ENCODE measurements at regions of chr1 and their contacts with region 1.

Region 1: DNA sequence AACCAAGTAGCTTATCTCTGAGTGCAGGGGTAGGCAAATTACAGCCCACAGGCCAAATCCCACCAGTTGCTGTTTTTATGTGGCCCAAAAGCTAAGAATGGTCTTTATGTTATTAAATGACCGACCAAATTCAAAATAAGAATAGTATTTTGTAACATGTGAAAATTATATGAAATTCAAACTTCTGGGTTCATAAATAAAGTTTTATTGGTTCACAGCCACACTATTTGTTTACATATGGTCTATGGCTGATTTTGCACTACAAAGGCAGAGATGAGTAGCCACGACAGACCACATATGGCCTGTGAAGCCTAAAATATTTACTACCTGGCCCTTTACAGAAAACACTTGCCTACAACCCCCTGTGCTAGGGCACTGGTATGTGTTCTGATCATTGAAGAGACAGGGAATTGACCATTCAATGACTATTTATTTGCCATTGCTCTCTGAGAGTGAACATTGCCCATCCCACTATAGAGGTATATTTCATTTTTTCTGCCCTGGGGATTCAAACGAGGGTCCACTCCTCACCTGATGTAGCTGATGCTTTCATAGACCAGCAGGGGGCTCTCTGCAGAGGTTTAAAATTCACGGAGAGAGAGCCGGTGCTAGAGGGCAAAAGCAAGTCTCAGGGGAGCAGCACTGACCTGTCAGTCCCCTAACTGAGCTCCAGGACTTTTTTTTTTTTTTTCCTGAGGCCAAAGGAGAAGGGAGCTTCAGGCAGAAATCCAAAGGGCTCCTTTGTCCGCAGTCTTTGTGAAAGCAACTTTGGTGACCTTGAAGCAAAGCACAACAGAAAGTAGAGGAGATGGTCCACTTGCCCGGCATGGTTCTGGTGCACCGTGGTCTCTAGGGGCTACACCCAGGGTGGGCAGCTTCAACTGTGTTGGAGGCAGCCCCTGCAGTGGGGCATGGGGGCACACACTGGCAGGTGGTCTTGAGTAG is 7.3 kb upstream of the GNL2 start:
- DNase-seq: no peak
- ATAC-seq: no peak
- H3K4me3 ChIP-seq: no peak overlapping the region
- H3K27ac ChIP-seq: no peak overlapping the region
- H3K4me1 ChIP-seq: no peaks in the 10 kb centered on the region
- H3K27me3 ChIP-seq: peaks cover 0 to 5% (median 0%) of the 10 kb centered on the region in 3 donors
- CTCF ChIP-seq: peak in 2 of 5 experiments; percentile 33 to 51
- POLR2A ChIP-seq: no peak

Region 2: DNA sequence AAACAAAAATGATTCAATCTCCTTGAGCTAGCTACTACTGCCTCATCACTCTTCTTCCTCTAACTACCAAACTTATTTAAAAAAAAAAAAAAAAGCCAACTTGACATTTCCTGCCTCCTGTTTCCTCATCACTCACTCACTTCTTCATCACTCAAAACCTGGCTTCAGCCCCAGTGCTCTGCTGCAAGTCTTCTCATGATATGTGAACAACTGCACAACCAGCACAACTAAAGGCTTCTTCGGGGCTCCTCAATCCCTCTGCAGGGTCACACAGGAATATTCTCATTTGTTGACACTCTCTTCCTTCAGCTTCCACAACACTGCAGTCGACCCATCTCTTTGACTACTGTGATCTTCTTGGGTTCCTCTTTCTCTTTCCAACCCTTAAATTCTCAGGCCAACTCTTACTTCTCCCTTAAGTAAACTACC is 248.8 kb after region 1 on chr1:
- in situ Hi-C with region 1: no loop called
- intact Hi-C with region 1: no loop called
- DNase-seq: no peak
- ATAC-seq: no peak
- H3K4me3 ChIP-seq: no peak overlapping the region
- H3K27ac ChIP-seq: peak overlapping the region in 1 of 4 donors; percentile 14
- H3K4me1 ChIP-seq: peaks cover 27 to 32% of the 10 kb centered on the region in 2 donors
- H3K27me3 ChIP-seq: no peaks in the 10 kb centered on the region
- CTCF ChIP-seq: no peak
- POLR2A ChIP-seq: no peak

Region 3: GRCh38 chr1:38834937-38835827 is 1232.2 kb after region 1 on chr1:
- in situ Hi-C with region 1: loop called in 1 of 4 experiments (anchors 25 kb)
- intact Hi-C with region 1: no loop called
- DNase-seq: peak in 1 of 2 donors; percentile 8
- ATAC-seq: peak; percentile 87 to 97
- H3K4me3 ChIP-seq: no peak overlapping the region
- H3K27ac ChIP-seq: no peak overlapping the region
- H3K4me1 ChIP-seq: no peaks in the 10 kb centered on the region
- H3K27me3 ChIP-seq: peaks cover 0 to 6% (median 0%) of the 10 kb centered on the region in 3 donors
- CTCF ChIP-seq: peak; percentile 52 to 79 (median 73)
- POLR2A ChIP-seq: no peak